ENCODE measurements at regions of chr18 and their contacts with region 1.

Region 1: DNA sequence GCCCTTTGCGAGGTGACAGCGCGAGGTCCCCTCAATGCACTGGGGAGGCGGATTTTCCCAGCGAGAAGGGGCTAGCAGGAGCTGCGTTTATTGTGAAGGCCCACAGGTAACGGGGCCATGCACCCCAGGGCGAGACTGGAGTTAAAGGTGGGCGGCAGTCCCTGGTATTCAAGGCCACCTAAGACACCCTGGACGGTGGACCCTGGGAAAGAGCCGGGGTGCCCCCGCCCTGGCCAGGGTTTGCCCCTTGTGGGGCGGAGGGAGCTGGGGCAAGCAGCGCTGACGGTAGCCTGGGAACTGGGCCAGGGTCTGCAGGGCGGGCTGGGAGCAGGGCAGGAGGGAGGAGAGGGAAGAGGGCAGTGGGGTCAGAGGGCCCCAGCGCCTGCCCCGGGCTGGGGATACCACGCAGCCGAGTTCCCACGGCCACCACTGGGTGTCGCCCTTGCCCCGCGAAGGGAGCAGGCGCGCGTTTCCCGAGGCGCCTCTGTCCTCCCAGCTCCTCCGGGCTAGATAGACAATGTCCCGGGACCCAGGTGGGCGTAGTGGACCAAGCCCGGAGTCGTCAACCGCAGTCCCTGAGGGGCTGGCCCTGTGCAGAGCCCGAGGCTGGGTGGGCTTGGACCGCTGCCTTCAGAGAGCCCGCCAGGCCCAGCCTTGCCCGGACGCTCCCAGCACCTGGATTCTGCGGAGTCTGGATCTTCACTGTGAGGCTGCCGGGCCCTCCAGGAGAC is 80.2 kb downstream of the SMAD4 start:
- DNase-seq: no peak
- ATAC-seq: peak; percentile 99
- H3K4me3 ChIP-seq: no peak overlapping the region
- H3K27ac ChIP-seq: no peak overlapping the region
- H3K4me1 ChIP-seq: peaks cover 8% of the 10 kb centered on the region; the same call in 1 of the 2 replicates
- H3K27me3 ChIP-seq: no peaks in the 10 kb centered on the region
- CTCF ChIP-seq: peak; percentile 79 to 98 (median 96)
- EP300 ChIP-seq: no peak
- POLR2A ChIP-seq: no peak
- RAD21 ChIP-seq: peak; percentile 94

Region 2: DNA sequence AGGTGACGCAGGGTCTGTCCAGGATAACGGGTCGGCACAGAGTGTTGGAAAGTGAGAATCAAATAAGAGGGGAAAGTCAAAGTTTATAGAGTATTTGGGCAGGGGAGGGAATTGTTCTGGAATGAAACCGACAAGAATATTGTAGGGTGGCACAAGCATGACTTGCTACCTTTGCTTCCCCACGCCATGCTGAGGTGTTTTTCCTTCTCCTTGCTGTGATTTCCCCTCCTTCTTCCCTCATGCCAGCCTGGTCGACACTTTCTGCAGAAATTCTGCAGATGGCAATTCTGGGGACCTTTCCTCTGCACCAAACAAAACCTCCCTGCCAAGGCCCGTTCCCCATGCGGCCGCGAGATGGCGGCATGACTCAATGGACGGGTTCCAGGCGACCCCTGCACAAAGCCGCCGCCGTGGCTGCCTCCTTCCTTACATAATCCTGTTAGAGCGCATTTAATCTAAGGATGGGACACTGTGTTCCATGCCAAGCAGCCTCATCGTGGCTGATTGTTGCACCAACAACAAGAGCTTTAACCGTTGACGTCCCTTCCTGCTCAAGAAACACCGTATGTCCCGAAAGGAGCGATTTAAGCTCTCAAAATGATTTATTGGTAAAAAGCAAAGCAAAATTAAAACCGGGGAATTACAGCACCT is 290.4 kb before region 1 on chr18 and contains the start of gene MRO:
- CTCF ChIA-PET with region 1: interaction called, 3 read pairs
- POLR2A ChIA-PET with region 1: no interaction called
- RAD21 ChIA-PET with region 1: interaction called, 3 read pairs
- SMC1A ChIA-PET with region 1: no interaction called
- in situ Hi-C with region 1: no loop called
- intact Hi-C with region 1: loop called (anchors 2 kb)
- DNase-seq: no peak
- ATAC-seq: peak; percentile 99
- H3K4me3 ChIP-seq: peak within 1 kb of the TSS; percentile 56
- H3K27ac ChIP-seq: no peak within 1 kb of the TSS
- H3K4me1 ChIP-seq: peaks cover 6% of the 10 kb centered on the region; the same call in 1 of the 2 replicates
- H3K27me3 ChIP-seq: no peaks in the 10 kb centered on the region
- CTCF ChIP-seq: peak; percentile 95 to 97 (median 96)
- EP300 ChIP-seq: no peak
- POLR2A ChIP-seq: no peak
- RAD21 ChIP-seq: peak; percentile 97
- polyA plus RNA-seq, gene MRO: 0.11 TPM in 1 of 2 experiments, not detected in the other

Region 3: GRCh38 chr18:51068105-51068504 is 42.1 kb before region 1 on chr18:
- CTCF ChIA-PET with region 1: no interaction called
- POLR2A ChIA-PET with region 1: no interaction called
- RAD21 ChIA-PET with region 1: no interaction called
- SMC1A ChIA-PET with region 1: no interaction called
- in situ Hi-C with region 1: no loop called
- intact Hi-C with region 1: no loop called
- DNase-seq: no peak
- ATAC-seq: no peak
- H3K4me3 ChIP-seq: no peak overlapping the region
- H3K27ac ChIP-seq: no peak overlapping the region
- H3K4me1 ChIP-seq: no peaks in the 10 kb centered on the region
- H3K27me3 ChIP-seq: no peaks in the 10 kb centered on the region
- CTCF ChIP-seq: no peak
- EP300 ChIP-seq: no peak
- POLR2A ChIP-seq: no peak
- RAD21 ChIP-seq: no peak

Region 4: DNA sequence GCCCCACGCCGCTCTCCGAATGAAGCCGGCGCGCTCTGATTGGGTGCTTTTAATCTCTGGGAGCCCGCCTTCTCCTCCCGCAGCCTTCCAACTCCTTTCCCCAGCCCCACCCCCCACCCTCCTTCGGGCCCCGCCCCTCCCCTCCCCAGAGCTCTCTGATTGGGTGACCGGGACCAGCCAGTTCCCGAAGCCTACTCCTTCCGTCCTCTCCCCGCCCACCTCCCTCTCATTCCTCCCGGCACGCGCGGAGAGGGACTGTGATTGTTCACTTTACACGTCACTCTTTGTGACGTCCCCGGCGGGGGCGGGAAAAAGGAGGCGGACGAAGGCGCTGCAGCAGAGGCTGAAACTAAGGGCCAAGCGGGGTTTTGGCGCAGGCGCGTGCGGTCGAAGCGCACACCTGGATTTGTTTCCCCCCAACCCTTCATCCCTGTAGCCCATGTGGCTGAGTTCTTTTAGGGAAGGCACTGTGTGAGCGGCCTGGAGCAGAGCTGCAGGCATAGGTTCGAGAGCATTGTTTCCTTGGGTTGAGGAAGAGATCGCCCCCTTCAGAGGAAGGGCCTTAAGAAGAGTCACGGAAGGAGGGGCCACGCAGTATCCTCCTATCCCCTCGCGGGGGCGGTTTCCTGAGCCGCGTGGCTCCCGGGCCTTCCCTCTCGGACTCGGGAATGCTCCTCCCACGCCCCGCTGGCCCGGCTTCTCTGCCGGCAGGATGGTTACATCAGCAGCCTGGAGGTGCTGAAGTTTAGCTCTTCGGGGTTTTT is 87.6 kb after region 1 on chr18 and contains the start of gene MEX3C:
- CTCF ChIA-PET with region 1: interaction called, 7 read pairs
- POLR2A ChIA-PET with region 1: no interaction called
- RAD21 ChIA-PET with region 1: interaction called, 5 read pairs
- SMC1A ChIA-PET with region 1: interaction called, 10 read pairs
- in situ Hi-C with region 1: no loop called
- intact Hi-C with region 1: no loop called
- DNase-seq: peak; percentile 95
- ATAC-seq: peak; percentile 83
- H3K4me3 ChIP-seq: peak within 1 kb of the TSS; percentile 69
- H3K27ac ChIP-seq: peak within 1 kb of the TSS; percentile 95
- H3K4me1 ChIP-seq: no peaks in the 10 kb centered on the region
- H3K27me3 ChIP-seq: no peaks in the 10 kb centered on the region
- CTCF ChIP-seq: peak in 2 of 3 experiments; percentile 9 to 23; a peak in 2 of 6 replicates
- EP300 ChIP-seq: no peak
- POLR2A ChIP-seq: peak; percentile 77
- RAD21 ChIP-seq: no peak
- polyA plus RNA-seq, gene MEX3C: 7.9 to 9.9 TPM

Region 5: GRCh38 chr18:51390702-51391101 is 280.5 kb after region 1 on chr18:
- CTCF ChIA-PET with region 1: interaction called, 18 read pairs
- POLR2A ChIA-PET with region 1: no interaction called
- RAD21 ChIA-PET with region 1: interaction called, 17 read pairs
- SMC1A ChIA-PET with region 1: interaction called, 6 read pairs
- in situ Hi-C with region 1: loop called (anchors 25 kb)
- intact Hi-C with region 1: no loop called
- DNase-seq: no peak
- ATAC-seq: no peak
- H3K4me3 ChIP-seq: no peak overlapping the region
- H3K27ac ChIP-seq: no peak overlapping the region
- H3K4me1 ChIP-seq: no peaks in the 10 kb centered on the region
- H3K27me3 ChIP-seq: no peaks in the 10 kb centered on the region; a peak in 1 of 4 replicates
- CTCF ChIP-seq: no peak
- EP300 ChIP-seq: no peak
- POLR2A ChIP-seq: no peak
- RAD21 ChIP-seq: no peak

Region 6: DNA sequence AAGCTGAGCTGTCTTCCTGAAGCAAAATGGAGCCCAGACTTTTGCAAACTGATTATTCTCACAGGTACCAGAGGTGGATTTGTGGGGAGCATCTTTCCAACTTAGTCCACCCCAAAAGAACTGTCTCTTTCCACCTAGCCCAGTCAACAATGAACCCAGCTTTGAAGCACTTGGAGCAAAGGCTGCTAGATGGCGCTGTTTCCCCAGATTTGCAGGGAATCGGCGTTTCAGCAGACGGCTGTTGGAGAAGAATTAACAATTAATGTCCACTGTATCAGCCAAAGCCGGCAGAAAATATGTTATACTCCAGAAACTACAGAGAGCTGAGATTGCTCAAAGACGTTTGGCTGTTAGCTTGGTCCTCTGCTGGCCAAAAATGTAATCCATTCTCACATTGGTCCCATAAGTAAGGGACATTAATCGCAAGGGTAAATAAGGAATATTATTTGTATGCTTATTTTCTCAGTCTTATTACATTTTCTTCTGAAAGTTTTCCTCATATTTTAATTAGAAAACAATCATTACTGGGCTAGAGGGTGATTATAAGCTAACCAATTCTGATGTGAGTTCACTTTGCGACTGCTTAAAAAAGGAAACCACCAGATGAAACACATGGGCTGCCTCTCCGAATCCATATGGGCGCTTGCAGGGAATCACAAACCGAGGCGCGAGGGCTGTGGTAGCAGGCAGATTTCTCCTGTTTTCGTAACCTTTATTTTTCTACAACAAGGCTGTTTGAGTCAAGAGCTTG is 511.1 kb after region 1 on chr18:
- CTCF ChIA-PET with region 1: interaction called, 19 read pairs
- POLR2A ChIA-PET with region 1: no interaction called
- RAD21 ChIA-PET with region 1: interaction called, 9 read pairs
- SMC1A ChIA-PET with region 1: no interaction called
- in situ Hi-C with region 1: no loop called
- intact Hi-C with region 1: loop called (anchors 5 kb)
- DNase-seq: peak; percentile 12
- ATAC-seq: peak; percentile 90
- H3K4me3 ChIP-seq: no peak overlapping the region
- H3K27ac ChIP-seq: no peak overlapping the region
- H3K4me1 ChIP-seq: no peaks in the 10 kb centered on the region
- H3K27me3 ChIP-seq: no peaks in the 10 kb centered on the region
- CTCF ChIP-seq: peak; percentile 87 to 92 (median 90)
- EP300 ChIP-seq: no peak
- POLR2A ChIP-seq: no peak
- RAD21 ChIP-seq: peak; percentile 98

Region 7: DNA sequence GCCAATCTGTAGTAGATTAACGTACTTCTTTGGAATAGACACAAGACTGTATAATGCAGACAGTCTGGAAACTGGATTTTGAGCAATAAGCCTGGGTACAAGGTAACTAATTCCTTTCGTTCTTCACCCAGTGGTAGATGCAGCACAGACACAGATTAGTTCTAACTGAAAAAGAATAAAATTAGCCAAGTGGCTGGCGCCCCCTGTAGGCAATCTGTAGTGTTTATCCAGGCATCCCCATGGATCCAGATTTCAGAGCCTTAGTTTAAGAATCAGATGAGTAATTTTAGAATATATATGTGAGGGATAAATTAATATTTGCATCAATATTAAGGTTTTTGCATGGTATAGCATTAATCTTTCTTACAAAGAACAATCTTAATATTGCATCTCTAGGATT is 1793.6 kb after region 1 on chr18:
- CTCF ChIA-PET with region 1: no interaction called
- POLR2A ChIA-PET with region 1: no interaction called
- RAD21 ChIA-PET with region 1: no interaction called
- SMC1A ChIA-PET with region 1: no interaction called
- in situ Hi-C with region 1: loop called (anchors 25 kb)
- intact Hi-C with region 1: no loop called
- DNase-seq: no peak
- ATAC-seq: peak; percentile 82
- H3K4me3 ChIP-seq: no peak overlapping the region
- H3K27ac ChIP-seq: no peak overlapping the region
- H3K4me1 ChIP-seq: no peaks in the 10 kb centered on the region
- H3K27me3 ChIP-seq: no peaks in the 10 kb centered on the region
- CTCF ChIP-seq: peak; percentile 46 to 55 (median 46)
- EP300 ChIP-seq: no peak
- POLR2A ChIP-seq: no peak
- RAD21 ChIP-seq: peak; percentile 63